ENCODE measurements at regions of chr11 and their contacts with region 1.

Region 1: GRCh38 chr11:59753650-59754493 is 1.3 kb upstream of the STX3 start:
- DNase-seq: peak; percentile 92
- ATAC-seq: peak; percentile 75
- H3K4me3 Mint-ChIP-seq: peak overlapping the region; percentile 98
- H3K27ac Mint-ChIP-seq: peak overlapping the region; percentile 91
- H3K4me1 Mint-ChIP-seq: peaks cover 37% of the 10 kb centered on the region
- H3K27me3 Mint-ChIP-seq: peaks cover 9% of the 10 kb centered on the region

Region 2: GRCh38 chr11:59767225-59767611 is 13.3 kb after region 1 on chr11:
- CTCF ChIA-PET with region 1: interaction called, 71 read pairs
- POLR2A ChIA-PET with region 1: interaction called, 6 read pairs
- DNase-seq: peak; percentile 77
- ATAC-seq: peak; percentile 83
- H3K4me3 Mint-ChIP-seq: no peak overlapping the region
- H3K27ac Mint-ChIP-seq: no peak overlapping the region
- H3K4me1 Mint-ChIP-seq: peaks cover 31% of the 10 kb centered on the region
- H3K27me3 Mint-ChIP-seq: no peaks in the 10 kb centered on the region

Region 3: GRCh38 chr11:59787816-59788215 is 33.9 kb after region 1 on chr11:
- CTCF ChIA-PET with region 1: interaction called, 10 read pairs
- POLR2A ChIA-PET with region 1: interaction called, 6 read pairs
- DNase-seq: no peak
- ATAC-seq: no peak
- H3K4me3 Mint-ChIP-seq: no peak overlapping the region
- H3K27ac Mint-ChIP-seq: peak overlapping the region; percentile 43
- H3K4me1 Mint-ChIP-seq: peaks cover 53% of the 10 kb centered on the region
- H3K27me3 Mint-ChIP-seq: no peaks in the 10 kb centered on the region

Region 4: DNA sequence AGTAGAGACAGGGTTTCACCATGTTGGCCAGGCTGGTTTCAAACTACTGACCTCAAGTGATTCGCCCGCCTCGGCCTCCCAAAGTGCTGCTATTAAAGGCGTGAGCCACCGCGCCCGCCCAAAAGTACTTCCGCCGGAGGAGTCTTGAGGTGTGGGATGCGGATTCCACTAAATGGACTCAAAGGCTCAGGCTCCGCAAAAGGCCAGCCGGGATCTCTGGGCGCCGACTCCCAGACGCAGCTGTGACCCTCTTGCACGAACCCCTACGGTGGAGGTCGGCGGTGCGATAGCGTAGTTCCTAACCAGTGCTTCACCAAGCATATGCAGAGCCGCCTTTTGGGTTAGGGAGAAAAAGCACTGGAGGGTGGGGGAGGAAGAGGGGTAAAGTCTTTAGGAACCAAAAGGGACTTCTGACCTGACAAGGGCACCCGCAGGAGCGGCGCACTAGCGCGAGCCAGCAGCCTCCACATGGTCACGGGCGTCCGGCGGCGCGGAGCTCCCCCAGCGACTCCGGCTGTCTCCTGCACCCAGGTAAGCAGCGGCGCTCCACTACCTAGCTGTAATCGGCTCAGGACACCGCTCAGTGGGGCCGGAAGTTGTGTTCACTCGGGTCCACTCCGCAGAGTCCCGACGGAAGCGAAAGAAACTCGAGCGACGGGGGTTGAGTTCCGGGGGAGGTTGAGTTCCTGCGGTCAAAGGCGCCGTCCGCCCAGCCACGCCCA is 56.5 kb after region 1 on chr11 and contains the start of gene MRPL16:
- CTCF ChIA-PET with region 1: interaction called, 55 read pairs
- POLR2A ChIA-PET with region 1: interaction called, 6 read pairs
- DNase-seq: peak; percentile 95
- ATAC-seq: peak; percentile 99
- H3K4me3 Mint-ChIP-seq: peak within 1 kb of the TSS; percentile 93
- H3K27ac Mint-ChIP-seq: peak within 1 kb of the TSS; percentile 94
- H3K4me1 Mint-ChIP-seq: peaks cover 52% of the 10 kb centered on the region
- H3K27me3 Mint-ChIP-seq: no peaks in the 10 kb centered on the region
- total RNA-seq, gene MRPL16: 85.7 to 86.0 TPM